ENCODE measurements at regions of chr10 and their contacts with region 1.

Region 1: GRCh38 chr10:133565441-133566294 is at the start of gene SYCE1:
- DNase-seq: no peak
- H3K4me3 ChIP-seq: no peak within 1 kb of the TSS
- H3K27ac ChIP-seq: no peak within 1 kb of the TSS
- H3K4me1 ChIP-seq: no peaks in the 10 kb centered on the region
- H3K27me3 ChIP-seq: peaks cover 4% of the 10 kb centered on the region
- CTCF ChIP-seq: no peak
- total RNA-seq, gene SYCE1: 0.33 to 21.7 TPM

Region 2: DNA sequence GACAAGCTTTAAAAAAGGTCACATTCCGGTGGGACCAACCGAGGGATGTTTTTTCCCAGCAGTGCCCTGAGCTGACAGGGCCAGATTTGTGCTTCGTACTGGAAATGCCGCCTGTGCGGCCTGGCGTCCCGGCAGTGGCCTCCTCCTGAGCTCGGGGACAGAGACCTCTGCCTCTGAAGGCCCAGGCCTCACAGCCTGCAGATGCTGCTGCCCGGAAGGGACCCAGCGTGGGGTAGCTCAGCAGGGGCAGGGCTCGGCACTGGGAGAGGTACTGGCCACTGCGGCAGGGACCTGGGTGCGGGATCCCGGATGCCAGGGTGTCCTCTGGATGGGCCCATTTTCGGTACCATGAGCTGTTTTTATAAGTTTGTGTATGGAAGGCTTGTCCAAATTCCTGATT is 570.9 kb before region 1 on chr10:
- CTCF ChIA-PET with region 1: no interaction called
- dilution Hi-C with region 1: no loop called
- in situ Hi-C with region 1: no loop called
- intact Hi-C with region 1: no loop called
- DNase-seq: no peak
- H3K4me3 ChIP-seq: no peak overlapping the region
- H3K27ac ChIP-seq: no peak overlapping the region
- H3K4me1 ChIP-seq: no peaks in the 10 kb centered on the region
- H3K27me3 ChIP-seq: no peaks in the 10 kb centered on the region
- CTCF ChIP-seq: no peak

Region 3: DNA sequence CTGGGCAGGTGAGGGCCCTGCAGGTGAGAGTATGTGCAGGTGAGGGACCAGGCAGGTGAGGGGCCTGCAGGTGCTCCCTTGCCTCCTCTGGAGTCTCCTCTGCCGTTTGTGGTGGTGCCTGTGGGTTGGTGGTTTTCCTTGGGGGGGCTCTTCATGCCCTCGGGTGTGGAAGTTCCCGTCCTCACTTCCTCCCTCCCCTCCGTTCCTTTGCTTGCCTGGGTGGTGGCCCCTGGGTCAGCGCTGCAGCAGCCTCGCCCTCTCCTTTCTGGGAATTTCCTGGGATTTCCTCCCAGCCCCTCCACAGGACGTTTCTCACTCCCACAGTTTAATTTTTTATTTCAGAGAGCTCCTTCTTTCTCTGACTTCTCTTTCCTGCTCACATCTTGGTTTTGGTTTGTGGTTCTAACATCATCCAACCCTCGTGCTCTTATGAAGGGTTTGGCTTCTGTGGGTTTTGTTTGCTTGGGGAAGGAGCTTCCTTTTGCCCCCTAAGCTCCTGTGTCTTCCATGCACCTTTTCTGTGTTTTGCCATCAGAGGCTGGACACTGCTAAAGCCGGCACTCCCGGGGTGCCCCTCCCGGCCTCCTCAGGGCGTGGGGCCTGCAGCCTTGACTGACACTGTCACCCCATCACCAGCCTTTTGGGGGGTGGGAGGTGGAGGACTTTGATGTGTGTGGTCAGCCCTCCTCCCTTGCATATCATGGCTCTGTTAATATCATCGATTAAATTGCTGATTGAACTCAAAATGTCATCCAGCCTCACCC is 507.2 kb before region 1 on chr10:
- CTCF ChIA-PET with region 1: no interaction called
- dilution Hi-C with region 1: no loop called
- in situ Hi-C with region 1: no loop called
- intact Hi-C with region 1: no loop called
- DNase-seq: no peak
- H3K4me3 ChIP-seq: no peak overlapping the region
- H3K27ac ChIP-seq: no peak overlapping the region
- H3K4me1 ChIP-seq: no peaks in the 10 kb centered on the region
- H3K27me3 ChIP-seq: no peaks in the 10 kb centered on the region
- CTCF ChIP-seq: no peak

Region 4: DNA sequence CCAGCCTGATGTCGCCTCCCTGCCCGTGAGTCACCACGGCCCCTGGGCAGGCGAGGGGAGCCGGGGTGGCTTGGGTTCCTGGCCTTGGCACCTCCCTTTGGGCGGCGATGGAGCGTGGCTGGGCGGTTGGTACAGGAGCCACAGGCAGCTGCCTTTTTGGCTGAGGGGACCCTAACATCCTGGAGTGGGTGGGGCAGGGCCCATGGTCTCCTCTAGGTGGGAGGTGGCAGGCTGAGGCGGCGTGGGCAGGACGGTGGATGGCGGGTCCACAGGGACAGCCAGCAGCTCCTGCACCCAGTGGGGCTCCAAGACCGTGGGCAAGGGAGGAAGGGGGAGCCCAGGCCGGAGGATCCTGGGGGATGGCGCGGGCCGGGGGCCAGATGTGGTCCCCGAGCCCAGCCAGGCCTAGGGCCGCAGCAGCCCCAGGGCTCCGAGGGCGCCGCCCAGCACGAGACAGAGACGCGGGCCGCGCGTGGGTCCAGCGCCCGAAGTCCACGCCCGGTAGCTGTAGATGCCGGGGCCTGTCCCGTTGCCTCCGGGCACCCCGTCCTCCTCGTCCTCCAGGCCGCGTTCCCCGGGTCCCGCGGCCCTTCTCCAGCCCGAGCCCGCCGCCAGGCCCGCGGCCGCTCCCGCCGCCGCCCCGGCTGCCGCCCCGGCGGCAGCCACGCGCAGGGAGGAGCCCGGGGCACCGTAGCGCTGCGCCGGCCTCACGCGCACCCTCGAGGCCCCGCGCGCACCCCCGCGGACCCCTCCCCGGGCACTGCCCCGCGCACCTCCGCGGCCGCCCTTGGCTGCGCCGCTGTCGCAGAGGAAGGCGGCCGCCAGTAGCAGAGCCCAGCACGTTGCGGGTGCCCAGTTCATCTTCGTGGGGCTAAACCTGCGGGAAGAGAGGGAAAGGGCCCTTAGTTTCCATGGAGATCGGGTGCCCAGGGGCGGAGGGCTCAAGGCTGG is 142.6 kb before region 1 on chr10:
- CTCF ChIA-PET with region 1: no interaction called
- dilution Hi-C with region 1: no loop called
- in situ Hi-C with region 1: loop called in 1 of 2 experiments (anchors 10 kb)
- intact Hi-C with region 1: no loop called
- DNase-seq: no peak
- H3K4me3 ChIP-seq: peak overlapping the region in 1 of 3 experiments; percentile 18
- H3K27ac ChIP-seq: no peak overlapping the region
- H3K4me1 ChIP-seq: peaks cover 4% of the 10 kb centered on the region
- H3K27me3 ChIP-seq: no peaks in the 10 kb centered on the region
- CTCF ChIP-seq: no peak

Region 5: GRCh38 chr10:133459454-133460207 is 106.0 kb before region 1 on chr10:
- CTCF ChIA-PET with region 1: no interaction called
- dilution Hi-C with region 1: loop called (anchors 5 kb)
- in situ Hi-C with region 1: no loop called
- intact Hi-C with region 1: no loop called
- DNase-seq: no peak
- H3K4me3 ChIP-seq: no peak overlapping the region
- H3K27ac ChIP-seq: no peak overlapping the region
- H3K4me1 ChIP-seq: no peaks in the 10 kb centered on the region
- H3K27me3 ChIP-seq: no peaks in the 10 kb centered on the region
- CTCF ChIP-seq: no peak

Region 6: GRCh38 chr10:133614830-133615580 is 49.3 kb after region 1 on chr10:
- CTCF ChIA-PET with region 1: no interaction called
- dilution Hi-C with region 1: loop called (anchors 5 kb)
- in situ Hi-C with region 1: no loop called
- intact Hi-C with region 1: no loop called
- DNase-seq: no peak
- H3K4me3 ChIP-seq: no peak overlapping the region
- H3K27ac ChIP-seq: no peak overlapping the region
- H3K4me1 ChIP-seq: no peaks in the 10 kb centered on the region
- H3K27me3 ChIP-seq: peaks cover 2% of the 10 kb centered on the region
- CTCF ChIP-seq: no peak

Measured in mammary epithelial cell (primary cell).